CD8-positive, alpha-beta T cell (primary cell): ENCODE measurements at regions of chr22 and their contacts with region 1.

Region 1: GRCh38 chr22:46542011-46542985 is 4.9 kb upstream of the CELSR1 start:
- DNase-seq: peak; percentile 51 to 84 (median 72)
- ATAC-seq: peak; percentile 100
- H3K4me3 ChIP-seq: no peak overlapping the region
- H3K4me3 Mint-ChIP-seq: no peak overlapping the region
- H3K27ac ChIP-seq: no peak overlapping the region
- H3K27ac Mint-ChIP-seq: no peak overlapping the region
- H3K4me1 ChIP-seq: no peaks in the 10 kb centered on the region
- H3K4me1 Mint-ChIP-seq: peaks cover 7% of the 10 kb centered on the region
- H3K27me3 ChIP-seq: peaks cover 5 to 11% of the 10 kb centered on the region in 2 experiments
- H3K27me3 Mint-ChIP-seq: peaks cover 44% of the 10 kb centered on the region
- CTCF ChIP-seq: peak; percentile 79

Region 2: GRCh38 chr22:46355371-46355995 is 186.8 kb before region 1 on chr22:
- CTCF ChIA-PET with region 1: interaction called, 23 read pairs
- POLR2A ChIA-PET with region 1: no interaction called
- intact Hi-C with region 1: loop called (anchors 1 kb)
- DNase-seq: peak; percentile 43 to 76 (median 68)
- ATAC-seq: peak; percentile 61
- H3K4me3 ChIP-seq: no peak overlapping the region
- H3K4me3 Mint-ChIP-seq: no peak overlapping the region
- H3K27ac ChIP-seq: no peak overlapping the region
- H3K27ac Mint-ChIP-seq: no peak overlapping the region
- H3K4me1 ChIP-seq: no peaks in the 10 kb centered on the region
- H3K4me1 Mint-ChIP-seq: no peaks in the 10 kb centered on the region
- H3K27me3 ChIP-seq: no peaks in the 10 kb centered on the region
- H3K27me3 Mint-ChIP-seq: no peaks in the 10 kb centered on the region
- CTCF ChIP-seq: peak; percentile 72

Region 3: GRCh38 chr22:46367707-46368191 is 174.5 kb before region 1 on chr22:
- CTCF ChIA-PET with region 1: interaction called, 57 read pairs
- POLR2A ChIA-PET with region 1: interaction called, 3 read pairs
- intact Hi-C with region 1: loop called (anchors 1 kb)
- DNase-seq: peak; percentile 45 to 86 (median 72)
- ATAC-seq: peak; percentile 60
- H3K4me3 ChIP-seq: peak overlapping the region; percentile 5 to 55
- H3K4me3 Mint-ChIP-seq: peak overlapping the region; percentile 29
- H3K27ac ChIP-seq: peak overlapping the region in 1 of 2 experiments; percentile 46
- H3K27ac Mint-ChIP-seq: no peak overlapping the region
- H3K4me1 ChIP-seq: peaks cover 40% of the 10 kb centered on the region
- H3K4me1 Mint-ChIP-seq: peaks cover 29% of the 10 kb centered on the region
- H3K27me3 ChIP-seq: peaks cover 0 to 9% of the 10 kb centered on the region in 2 experiments
- H3K27me3 Mint-ChIP-seq: peaks cover 4% of the 10 kb centered on the region
- CTCF ChIP-seq: peak; percentile 82

Region 4: GRCh38 chr22:47092896-47093311 is 550.6 kb after region 1 on chr22:
- CTCF ChIA-PET with region 1: no interaction called
- POLR2A ChIA-PET with region 1: no interaction called
- intact Hi-C with region 1: no loop called
- DNase-seq: no peak
- ATAC-seq: no peak
- H3K4me3 ChIP-seq: no peak overlapping the region
- H3K4me3 Mint-ChIP-seq: no peak overlapping the region
- H3K27ac ChIP-seq: no peak overlapping the region
- H3K27ac Mint-ChIP-seq: no peak overlapping the region
- H3K4me1 ChIP-seq: peaks cover 9% of the 10 kb centered on the region
- H3K4me1 Mint-ChIP-seq: peaks cover 52% of the 10 kb centered on the region
- H3K27me3 ChIP-seq: no peaks in the 10 kb centered on the region
- H3K27me3 Mint-ChIP-seq: no peaks in the 10 kb centered on the region
- CTCF ChIP-seq: no peak